PC-9 (cell line): ENCODE measurements at regions of chr9 and their contacts with region 1.

Region 1: DNA sequence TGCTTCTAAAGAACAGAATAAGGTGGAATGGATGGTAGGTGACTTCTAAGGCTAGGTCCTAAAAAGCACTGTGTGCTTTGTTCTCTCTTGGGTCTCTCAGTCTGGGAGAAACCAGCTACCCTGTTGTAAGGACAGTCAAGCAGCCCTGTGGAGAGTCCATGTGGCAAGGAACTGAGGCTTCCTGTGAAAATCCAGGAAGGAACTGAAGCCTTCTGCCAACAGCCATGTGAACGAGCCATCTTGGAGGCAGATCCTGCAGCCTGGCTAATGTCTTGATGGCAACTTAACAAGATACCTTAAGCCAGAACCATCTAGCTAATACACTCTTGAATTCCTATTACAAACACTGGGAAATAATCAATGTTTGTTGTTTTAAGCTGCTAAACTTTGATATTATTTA is 100.1 kb upstream of the PCA3 start:
- DNase-seq: no peak
- H3K4me3 ChIP-seq: no peak overlapping the region
- H3K27ac ChIP-seq: no peak overlapping the region
- H3K4me1 ChIP-seq: no peaks in the 10 kb centered on the region
- H3K27me3 ChIP-seq: peaks cover 3% of the 10 kb centered on the region; the same call in 1 of the 2 replicates
- CTCF ChIP-seq: no peak

Region 2: GRCh38 chr9:76624391-76625048 is 39.6 kb before region 1 on chr9:
- CTCF ChIA-PET with region 1: no interaction called
- POLR2A ChIA-PET with region 1: no interaction called
- intact Hi-C with region 1: no loop called
- DNase-seq: no peak
- H3K4me3 ChIP-seq: no peak overlapping the region
- H3K27ac ChIP-seq: no peak overlapping the region
- H3K4me1 ChIP-seq: no peaks in the 10 kb centered on the region
- H3K27me3 ChIP-seq: no peaks in the 10 kb centered on the region
- CTCF ChIP-seq: no peak

Region 3: GRCh38 chr9:76880210-76880609 is 216.1 kb after region 1 on chr9:
- CTCF ChIA-PET with region 1: interaction called, 10 read pairs
- POLR2A ChIA-PET with region 1: no interaction called
- intact Hi-C with region 1: no loop called
- DNase-seq: no peak
- H3K4me3 ChIP-seq: no peak overlapping the region
- H3K27ac ChIP-seq: no peak overlapping the region
- H3K4me1 ChIP-seq: no peaks in the 10 kb centered on the region
- H3K27me3 ChIP-seq: peaks cover 23% of the 10 kb centered on the region; the same call in 1 of the 2 replicates
- CTCF ChIP-seq: no peak